H1 (cell line): ENCODE measurements at regions of chr6 and their contacts with region 1.

Region 1: DNA sequence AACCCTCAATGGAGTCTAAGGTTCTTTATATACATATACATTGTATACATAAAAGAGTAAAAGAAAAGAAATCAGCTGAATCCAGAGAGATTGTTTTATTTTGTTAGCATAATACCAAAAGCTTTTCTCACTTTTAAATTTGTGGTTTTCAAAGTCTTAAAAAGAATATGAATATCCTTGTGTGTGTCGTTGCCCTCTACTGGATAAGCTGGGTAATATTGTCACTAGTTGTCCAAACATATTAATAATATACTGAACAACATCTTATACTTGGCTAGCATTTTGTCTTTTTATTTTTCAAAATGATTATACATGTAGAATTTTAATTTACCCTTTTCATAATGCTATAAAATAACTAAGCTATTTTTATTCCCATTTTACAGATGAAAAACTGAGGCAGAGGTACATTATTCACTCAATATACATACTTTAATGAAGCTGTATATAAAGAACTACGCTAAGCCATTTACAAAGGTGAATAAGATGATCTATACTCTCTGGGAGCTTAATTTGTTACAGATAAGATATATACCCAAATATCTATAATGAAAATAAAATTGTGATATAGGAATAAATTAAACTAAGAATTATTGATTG is 531.7 kb downstream of the TFAP2B start:
- DNase-seq: no peak
- H3K4me3 ChIP-seq: no peak overlapping the region
- H3K27ac ChIP-seq: no peak overlapping the region
- H3K4me1 ChIP-seq: no peaks in the 10 kb centered on the region
- H3K27me3 ChIP-seq: no peaks in the 10 kb centered on the region
- CTCF ChIP-seq: peak in 2 of 3 experiments; percentile 6 to 46; a peak in 2 of 4 replicates
- EP300 ChIP-seq: no peak
- POLR2A ChIP-seq: no peak
- RAD21 ChIP-seq: peak in 1 of 2 experiments; percentile 52; a peak in 3 of 4 replicates

Region 2: GRCh38 chr6:51339719-51340118 is 10.7 kb before region 1 on chr6:
- CTCF ChIA-PET with region 1: interaction called, 13 read pairs
- POLR2A ChIA-PET with region 1: no interaction called
- DNase-seq: no peak
- H3K4me3 ChIP-seq: no peak overlapping the region; a peak in 1 of 8 replicates
- H3K27ac ChIP-seq: no peak overlapping the region
- H3K4me1 ChIP-seq: peaks cover 0 to 5% (median 2%) of the 10 kb centered on the region in 4 experiments; a peak in 4 of 7 replicates
- H3K27me3 ChIP-seq: no peaks in the 10 kb centered on the region
- CTCF ChIP-seq: no peak
- EP300 ChIP-seq: no peak
- POLR2A ChIP-seq: no peak
- RAD21 ChIP-seq: no peak

Region 3: DNA sequence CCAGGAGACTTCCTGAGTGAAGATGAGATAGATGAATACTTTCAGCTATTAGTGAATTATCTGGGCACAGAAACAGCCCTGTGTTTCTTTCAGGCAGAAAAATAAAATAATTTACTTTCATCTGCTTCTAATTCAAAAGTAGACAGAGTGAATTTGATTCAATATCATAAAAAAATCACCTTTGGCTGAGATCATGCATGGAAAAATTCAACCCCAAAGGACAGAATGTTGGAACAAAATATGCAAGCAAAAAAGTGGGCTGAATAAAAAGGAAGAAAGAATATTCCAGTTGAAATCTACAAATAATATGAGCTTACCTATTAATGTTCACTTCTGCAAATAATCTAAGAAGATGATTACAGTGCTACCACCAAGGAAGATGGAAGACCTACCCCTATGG is 15.2 kb after region 1 on chr6:
- CTCF ChIA-PET with region 1: interaction called, 10 read pairs
- POLR2A ChIA-PET with region 1: no interaction called
- DNase-seq: no peak
- H3K4me3 ChIP-seq: no peak overlapping the region
- H3K27ac ChIP-seq: no peak overlapping the region
- H3K4me1 ChIP-seq: no peaks in the 10 kb centered on the region
- H3K27me3 ChIP-seq: no peaks in the 10 kb centered on the region
- CTCF ChIP-seq: no peak
- EP300 ChIP-seq: no peak
- POLR2A ChIP-seq: no peak
- RAD21 ChIP-seq: no peak